Activated CD4-positive, alpha-beta memory T cell treated with anti-CD3 and anti-CD28 coated beads, Interleukin-2, amount 10 ng/mL, durations not matched to agents 7 days and 5 days (primary cell): ENCODE measurements at regions of chr12 and their contacts with region 1.

Region 1: DNA sequence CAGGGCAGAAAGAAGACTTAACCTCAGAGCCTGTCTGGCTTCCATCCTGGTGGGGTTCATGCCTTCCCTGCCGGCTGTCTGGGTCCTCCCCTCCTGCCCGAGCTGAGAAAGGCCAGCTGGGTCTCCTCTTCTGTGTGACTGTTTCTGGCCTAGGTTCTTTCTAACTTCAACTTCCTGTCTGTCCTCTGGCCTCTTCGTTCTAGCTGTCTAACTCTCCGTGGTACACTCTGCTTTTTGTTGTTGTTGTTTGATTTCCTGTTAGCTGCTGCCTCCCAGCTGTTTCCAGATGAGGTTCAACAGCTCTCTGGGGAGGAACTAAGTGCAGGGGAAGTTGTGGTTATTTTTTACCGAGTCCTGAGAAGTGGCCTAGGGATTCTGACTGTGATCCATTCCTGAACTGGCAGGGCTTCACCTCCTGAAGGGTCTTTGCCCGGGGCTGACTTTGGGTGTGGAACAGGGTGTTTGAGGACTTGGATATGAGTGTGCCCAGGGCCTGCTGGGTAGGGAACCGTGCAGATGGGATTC is 3.2 kb downstream of the MLXIP start:
- DNase-seq: peak; percentile 51
- H3K4me3 Mint-ChIP-seq: peak overlapping the region; percentile 91
- H3K27ac Mint-ChIP-seq: peak overlapping the region; percentile 84
- H3K4me1 Mint-ChIP-seq: peaks cover 53% of the 10 kb centered on the region
- H3K27me3 Mint-ChIP-seq: no peaks in the 10 kb centered on the region

Region 2: GRCh38 chr12:122051231-122051876 is 30.4 kb before region 1 on chr12:
- CTCF ChIA-PET with region 1: interaction called, 17 read pairs
- POLR2A ChIA-PET with region 1: interaction called, 5 read pairs
- DNase-seq: no peak
- H3K4me3 Mint-ChIP-seq: no peak overlapping the region
- H3K27ac Mint-ChIP-seq: no peak overlapping the region
- H3K4me1 Mint-ChIP-seq: peaks cover 3% of the 10 kb centered on the region
- H3K27me3 Mint-ChIP-seq: no peaks in the 10 kb centered on the region

Region 3: DNA sequence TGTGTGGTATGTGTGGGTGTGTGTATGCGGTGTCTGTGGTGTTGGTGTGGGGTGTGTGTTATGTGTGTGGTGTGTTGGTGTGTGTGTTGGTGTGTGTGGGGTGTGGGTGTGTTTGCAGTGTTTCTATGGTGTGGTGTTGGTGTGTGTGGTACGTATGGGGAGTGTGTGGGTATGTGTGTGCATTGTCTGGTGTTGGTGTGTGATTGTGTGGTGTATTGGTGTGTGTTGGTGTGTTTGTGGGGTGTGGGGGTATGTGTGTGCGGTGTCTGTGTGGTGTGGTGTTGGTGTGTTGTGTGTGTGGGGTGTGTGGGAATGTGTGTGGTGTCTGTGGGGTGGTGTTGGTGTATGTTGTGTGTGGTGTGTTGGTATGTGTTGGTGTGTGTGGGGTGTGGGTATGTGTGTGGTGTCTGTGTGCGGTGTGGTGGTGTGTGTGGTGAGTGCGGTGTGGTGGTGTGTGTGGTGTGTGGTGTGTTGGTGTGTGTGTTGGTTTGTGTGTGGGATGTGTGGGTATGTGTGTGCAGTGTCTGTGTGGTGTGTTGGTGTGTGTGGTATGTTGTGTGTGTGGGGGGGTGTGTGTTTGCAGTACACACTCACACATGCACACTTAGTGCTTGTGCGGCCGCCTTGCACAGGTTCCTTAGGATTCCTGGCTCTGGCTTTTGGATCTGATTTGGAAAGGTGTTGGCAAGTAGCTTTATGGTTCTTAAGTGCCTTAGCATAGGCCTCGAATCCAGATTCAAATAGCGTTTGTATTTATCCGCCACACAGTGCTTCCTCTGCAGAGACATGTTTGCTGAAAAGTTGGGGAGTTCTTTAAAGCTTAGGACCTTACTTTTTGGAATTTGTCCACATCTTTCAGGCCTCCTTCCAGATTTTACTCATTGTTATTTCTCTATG is 13.2 kb after region 1 on chr12:
- CTCF ChIA-PET with region 1: interaction called, 3 read pairs
- POLR2A ChIA-PET with region 1: interaction called, 10 read pairs
- DNase-seq: no peak
- H3K4me3 Mint-ChIP-seq: no peak overlapping the region
- H3K27ac Mint-ChIP-seq: no peak overlapping the region
- H3K4me1 Mint-ChIP-seq: peaks cover 26% of the 10 kb centered on the region
- H3K27me3 Mint-ChIP-seq: no peaks in the 10 kb centered on the region

Region 4: DNA sequence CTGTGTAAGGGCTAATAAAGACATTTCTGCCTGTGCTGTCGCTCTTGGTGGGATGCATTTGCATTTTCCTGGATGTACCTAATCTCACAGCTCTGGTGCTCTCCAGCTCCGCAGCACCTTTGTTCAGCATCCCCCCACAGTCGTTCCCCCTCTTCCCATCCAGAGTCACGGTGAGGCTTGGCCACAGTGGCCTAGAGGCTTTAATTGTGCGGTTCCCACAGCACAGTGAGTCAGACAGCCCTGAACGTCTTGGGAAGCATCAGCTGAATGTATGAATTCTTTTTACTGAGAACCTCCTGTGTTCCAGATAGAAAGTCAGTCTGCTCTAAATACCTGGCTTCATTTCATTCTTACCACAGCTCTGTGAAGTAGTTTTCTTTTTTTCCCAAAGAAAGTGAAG is 25.5 kb after region 1 on chr12:
- CTCF ChIA-PET with region 1: interaction called, 11 read pairs
- POLR2A ChIA-PET with region 1: interaction called, 10 read pairs
- DNase-seq: no peak
- H3K4me3 Mint-ChIP-seq: no peak overlapping the region
- H3K27ac Mint-ChIP-seq: no peak overlapping the region
- H3K4me1 Mint-ChIP-seq: peaks cover 58% of the 10 kb centered on the region
- H3K27me3 Mint-ChIP-seq: no peaks in the 10 kb centered on the region